Right ventricle myocardium superior (tissue), 1 donor: ENCODE measurements at regions of chr1 and their contacts with region 1.

Region 1: GRCh38 chr1:244864253-244865027 is at the start of gene HNRNPU:
- DNase-seq: peak; percentile 99
- ATAC-seq: peak; percentile 91
- total RNA-seq, gene HNRNPU: 164 TPM

Region 2: GRCh38 chr1:244835276-244836134 is 28.9 kb before region 1 on chr1 and contains the start of gene COX20:
- intact Hi-C with region 1: loop called (anchors 2 kb)
- DNase-seq: peak; percentile 95
- ATAC-seq: peak; percentile 91
- total RNA-seq, gene COX20: 68.7 TPM

Region 3: GRCh38 chr1:244970661-244971551 is 106.5 kb after region 1 on chr1:
- intact Hi-C with region 1: loop called (anchors 2 kb)
- DNase-seq: peak; percentile 96
- ATAC-seq: peak; percentile 85